ENCODE measurements at regions of chrX and their contacts with region 1.

Region 1: GRCh38 chrX:118974088-118974907 is at the start of gene LONRF3:
- DNase-seq: peak; percentile 68
- H3K4me3 ChIP-seq: peak within 1 kb of the TSS; percentile 33 to 34
- H3K27ac ChIP-seq: peak within 1 kb of the TSS; percentile 41 to 54
- H3K4me1 ChIP-seq: no peaks in the 10 kb centered on the region
- H3K27me3 ChIP-seq: no peaks in the 10 kb centered on the region
- CTCF ChIP-seq: no peak
- POLR2A ChIP-seq: peak; percentile 79
- total RNA-seq, gene LONRF3: 3.5 to 8.1 TPM

Region 2: GRCh38 chrX:118502161-118502789 is 472.0 kb before region 1 on chrX:
- intact Hi-C with region 1: loop called (anchors 10 kb)
- DNase-seq: no peak
- H3K4me3 ChIP-seq: no peak overlapping the region
- H3K27ac ChIP-seq: no peak overlapping the region
- H3K4me1 ChIP-seq: no peaks in the 10 kb centered on the region
- H3K27me3 ChIP-seq: no peaks in the 10 kb centered on the region
- CTCF ChIP-seq: no peak
- POLR2A ChIP-seq: no peak

Region 3: DNA sequence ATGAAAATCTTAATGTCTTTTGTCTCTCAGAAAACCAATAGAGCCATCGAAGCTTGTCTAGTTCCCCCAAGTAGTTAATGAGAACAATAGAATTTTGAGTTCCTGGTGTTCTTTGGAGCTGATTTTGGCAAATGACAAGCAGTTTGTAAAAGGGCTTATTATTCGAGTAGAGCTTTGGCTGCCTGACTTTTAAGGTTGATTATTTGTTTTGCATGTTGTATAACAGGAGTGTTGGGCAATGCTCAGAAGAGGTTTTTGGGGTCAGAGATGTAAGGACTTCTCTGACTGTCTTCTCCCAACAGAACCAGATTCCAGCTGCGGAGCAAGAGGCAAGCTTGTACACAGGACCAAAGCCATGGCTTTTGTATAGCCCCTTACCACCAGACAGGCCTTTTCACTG is 120.7 kb before region 1 on chrX:
- intact Hi-C with region 1: loop called (anchors 10 kb)
- DNase-seq: peak; percentile 32
- H3K4me3 ChIP-seq: no peak overlapping the region
- H3K27ac ChIP-seq: no peak overlapping the region
- H3K4me1 ChIP-seq: no peaks in the 10 kb centered on the region
- H3K27me3 ChIP-seq: no peaks in the 10 kb centered on the region
- CTCF ChIP-seq: no peak
- POLR2A ChIP-seq: no peak